ENCODE measurements at regions of chr13 and their contacts with region 1.

Region 1: DNA sequence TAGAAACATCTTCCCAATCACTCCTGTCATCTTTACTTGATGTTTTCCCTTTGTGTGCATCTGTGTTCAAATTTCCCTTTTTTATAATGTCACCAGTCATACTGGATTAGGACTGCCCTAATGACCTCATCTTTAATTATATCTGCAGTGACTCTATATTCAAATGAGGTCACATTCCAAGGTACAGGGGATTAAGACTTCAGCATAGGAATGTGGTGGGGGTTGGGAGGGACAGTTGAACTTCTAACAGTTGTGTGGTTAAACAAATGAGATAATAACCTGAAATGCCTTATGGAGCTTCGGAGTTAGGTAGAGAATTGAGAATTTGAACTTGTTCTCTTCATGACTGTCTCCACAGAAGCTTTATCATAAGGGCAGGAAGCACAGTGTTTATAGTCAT is 23.0 kb downstream of the PAN3 start:
- DNase-seq: no peak
- H3K4me3 ChIP-seq: no peak overlapping the region
- H3K27ac ChIP-seq: no peak overlapping the region
- H3K4me1 ChIP-seq: peaks cover 0 to 9% of the 10 kb centered on the region in 2 donors
- H3K27me3 ChIP-seq: no peaks in the 10 kb centered on the region
- CTCF ChIP-seq: no peak
- POLR2A ChIP-seq: no peak

Region 2: DNA sequence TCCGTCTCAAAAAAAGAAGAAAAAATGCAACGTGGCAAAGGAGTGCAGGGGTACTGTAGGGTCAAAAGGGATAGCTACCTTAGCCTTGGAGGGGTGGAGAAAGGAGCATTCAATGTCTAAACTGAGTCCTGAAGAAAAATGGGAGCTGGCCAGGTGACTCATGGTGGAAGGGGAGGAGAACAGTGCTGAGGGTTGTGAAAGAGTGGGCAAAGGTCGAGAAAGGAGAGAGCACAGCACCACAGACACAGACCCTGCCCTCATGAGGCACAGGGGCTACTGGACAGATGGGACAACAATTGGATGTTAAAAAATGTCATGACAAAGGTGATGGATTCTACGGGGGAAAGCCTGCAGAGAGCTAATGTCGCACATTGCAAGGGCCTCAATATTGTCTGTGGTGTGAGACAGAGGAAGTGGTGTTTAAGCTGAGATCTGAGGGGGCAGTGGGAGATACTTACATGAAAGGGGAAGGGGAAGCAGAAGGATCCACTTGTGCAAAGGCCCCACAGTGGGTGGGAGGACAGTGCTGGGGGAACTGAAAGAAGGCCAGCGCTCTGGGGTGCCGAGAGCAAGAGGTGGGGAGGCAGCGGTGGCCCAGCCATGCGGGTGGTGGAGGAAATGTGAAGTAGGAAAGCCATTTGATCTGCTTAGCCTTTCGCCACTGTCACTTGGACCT is 130.0 kb before region 1 on chr13:
- intact Hi-C with region 1: loop called (anchors 5 kb)
- DNase-seq: peak in 1 of 2 donors; percentile 17
- H3K4me3 ChIP-seq: no peak overlapping the region
- H3K27ac ChIP-seq: no peak overlapping the region
- H3K4me1 ChIP-seq: no peaks in the 10 kb centered on the region
- H3K27me3 ChIP-seq: no peaks in the 10 kb centered on the region
- CTCF ChIP-seq: no peak
- POLR2A ChIP-seq: no peak

Region 3: GRCh38 chr13:28935104-28935503 is 773.7 kb after region 1 on chr13:
- intact Hi-C with region 1: loop called (anchors 10 kb)
- DNase-seq: no peak
- H3K4me3 ChIP-seq: no peak overlapping the region
- H3K27ac ChIP-seq: no peak overlapping the region
- H3K4me1 ChIP-seq: no peaks in the 10 kb centered on the region
- H3K27me3 ChIP-seq: no peaks in the 10 kb centered on the region
- CTCF ChIP-seq: no peak
- POLR2A ChIP-seq: no peak